ENCODE measurements at regions of chr3 and their contacts with region 1.

Region 1: DNA sequence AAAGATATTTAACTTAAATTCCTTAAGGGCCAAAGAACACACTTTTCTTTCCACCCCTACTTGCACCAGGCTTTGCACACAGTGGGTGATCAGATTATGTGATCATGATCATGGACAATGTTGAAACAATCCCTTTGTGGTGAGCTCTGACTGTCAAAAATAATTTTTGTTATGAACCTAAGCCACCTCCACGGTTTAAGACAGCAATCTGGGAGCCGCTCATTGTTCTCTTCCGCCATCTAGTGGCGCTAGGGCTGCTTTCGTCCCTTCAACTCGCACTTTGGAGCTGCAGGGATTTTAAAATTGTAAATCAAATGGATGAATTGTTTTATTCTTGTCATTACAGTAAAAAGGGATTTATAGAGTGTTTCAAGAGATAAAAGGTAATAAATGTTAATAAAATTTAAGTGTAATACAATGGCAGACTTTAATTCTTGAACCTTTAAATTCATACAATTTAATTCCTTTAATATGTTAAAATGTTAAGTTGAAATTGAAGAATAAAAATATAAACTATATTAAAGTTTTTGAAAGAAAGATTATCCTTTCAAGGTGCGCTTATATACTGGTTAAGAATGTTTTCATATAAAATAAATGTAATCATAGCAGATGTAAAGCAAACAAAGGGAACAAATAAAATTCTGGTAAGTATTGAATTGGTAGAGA is 45.3 kb upstream of the ARL6 start:
- DNase-seq: peak; percentile 79
- ATAC-seq: peak; percentile 84
- H3K4me3 Mint-ChIP-seq: no peak overlapping the region
- H3K27ac Mint-ChIP-seq: no peak overlapping the region
- H3K4me1 Mint-ChIP-seq: no peaks in the 10 kb centered on the region
- H3K27me3 Mint-ChIP-seq: peaks cover 3% of the 10 kb centered on the region
- CTCF ChIP-seq: peak; percentile 88

Region 2: GRCh38 chr3:96863129-96863740 is 856.1 kb before region 1 on chr3:
- CTCF ChIA-PET with region 1: interaction called, 3 read pairs
- POLR2A ChIA-PET with region 1: no interaction called
- intact Hi-C with region 1: loop called (anchors 5 kb)
- DNase-seq: peak; percentile 35
- ATAC-seq: no peak
- H3K4me3 Mint-ChIP-seq: no peak overlapping the region
- H3K27ac Mint-ChIP-seq: no peak overlapping the region
- H3K4me1 Mint-ChIP-seq: no peaks in the 10 kb centered on the region
- H3K27me3 Mint-ChIP-seq: no peaks in the 10 kb centered on the region
- CTCF ChIP-seq: peak; percentile 46

Region 3: DNA sequence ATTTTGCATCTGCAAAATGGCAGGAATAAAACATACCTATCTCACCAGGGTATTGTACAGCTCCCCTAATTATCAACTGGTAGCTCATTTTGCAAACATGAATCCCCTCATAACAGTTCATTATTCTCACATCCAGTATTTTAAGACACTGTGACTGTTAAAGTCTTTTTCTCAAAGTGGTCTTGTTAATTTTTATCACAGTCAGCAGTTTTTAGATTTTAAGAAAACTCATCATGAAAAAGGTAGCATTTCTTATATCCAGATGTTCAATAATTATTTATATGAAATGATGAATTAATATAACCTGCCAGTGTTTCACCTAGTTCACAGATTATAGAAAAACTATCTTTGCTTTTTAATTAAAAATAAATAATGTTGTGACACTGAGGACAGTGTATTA is 309.7 kb before region 1 on chr3:
- CTCF ChIA-PET with region 1: no interaction called
- POLR2A ChIA-PET with region 1: no interaction called
- intact Hi-C with region 1: no loop called
- DNase-seq: no peak
- ATAC-seq: no peak
- H3K4me3 Mint-ChIP-seq: no peak overlapping the region
- H3K27ac Mint-ChIP-seq: no peak overlapping the region
- H3K4me1 Mint-ChIP-seq: no peaks in the 10 kb centered on the region
- H3K27me3 Mint-ChIP-seq: no peaks in the 10 kb centered on the region
- CTCF ChIP-seq: no peak

Region 4: DNA sequence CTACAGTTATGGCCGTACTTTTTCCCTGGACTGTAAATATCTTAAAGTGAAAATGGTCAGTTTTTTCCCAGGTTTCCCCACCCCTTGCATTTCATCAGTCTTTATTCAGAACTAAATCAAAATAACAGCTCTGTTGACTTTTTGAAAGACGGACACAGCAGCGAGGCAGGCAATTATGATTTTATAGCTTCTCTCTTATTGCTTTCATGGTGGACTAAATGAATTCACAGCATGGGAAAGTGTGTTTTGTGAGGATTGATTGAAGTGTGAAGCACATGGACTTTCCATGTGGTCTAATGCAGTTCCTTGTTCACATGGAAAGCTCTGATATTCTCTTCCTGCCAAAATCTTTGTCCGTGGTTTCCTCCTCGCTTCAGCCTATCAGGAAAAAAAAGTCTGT is 223.4 kb before region 1 on chr3:
- CTCF ChIA-PET with region 1: no interaction called
- POLR2A ChIA-PET with region 1: no interaction called
- intact Hi-C with region 1: no loop called
- DNase-seq: no peak
- ATAC-seq: no peak
- H3K4me3 Mint-ChIP-seq: no peak overlapping the region
- H3K27ac Mint-ChIP-seq: no peak overlapping the region
- H3K4me1 Mint-ChIP-seq: no peaks in the 10 kb centered on the region
- H3K27me3 Mint-ChIP-seq: no peaks in the 10 kb centered on the region
- CTCF ChIP-seq: no peak

Region 5: DNA sequence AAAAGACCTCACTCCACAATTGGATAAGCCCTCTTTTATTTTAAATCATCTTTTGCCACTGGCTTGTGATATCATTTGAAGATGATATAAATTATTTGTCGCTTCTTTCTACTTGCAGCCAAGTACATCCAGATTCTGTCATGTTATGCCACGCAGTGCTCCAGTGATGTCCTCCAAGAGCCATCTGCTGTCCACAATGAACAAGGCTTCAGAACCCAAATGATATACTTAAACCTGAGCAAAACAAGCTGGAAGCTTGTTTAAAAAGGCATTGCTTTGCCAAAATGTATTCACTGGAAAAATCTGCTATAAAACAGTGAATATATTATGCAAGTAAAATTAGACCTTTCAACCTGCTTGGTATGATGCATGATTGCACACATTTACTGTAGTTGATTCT is 13.5 kb before region 1 on chr3:
- CTCF ChIA-PET with region 1: interaction called, 12 read pairs
- POLR2A ChIA-PET with region 1: no interaction called
- intact Hi-C with region 1: no loop called
- DNase-seq: no peak
- ATAC-seq: no peak
- H3K4me3 Mint-ChIP-seq: no peak overlapping the region
- H3K27ac Mint-ChIP-seq: no peak overlapping the region
- H3K4me1 Mint-ChIP-seq: no peaks in the 10 kb centered on the region
- H3K27me3 Mint-ChIP-seq: peaks cover 5% of the 10 kb centered on the region
- CTCF ChIP-seq: no peak

Region 6: GRCh38 chr3:97764407-97765238 is 45.3 kb after region 1 on chr3 and contains the start of gene ARL6:
- CTCF ChIA-PET with region 1: interaction called, 12 read pairs
- POLR2A ChIA-PET with region 1: no interaction called
- intact Hi-C with region 1: no loop called
- DNase-seq: peak; percentile 83
- ATAC-seq: peak; percentile 95
- H3K4me3 Mint-ChIP-seq: peak within 1 kb of the TSS; percentile 95
- H3K27ac Mint-ChIP-seq: peak within 1 kb of the TSS; percentile 92
- H3K4me1 Mint-ChIP-seq: peaks cover 20% of the 10 kb centered on the region
- H3K27me3 Mint-ChIP-seq: no peaks in the 10 kb centered on the region
- CTCF ChIP-seq: no peak
- total RNA-seq, gene ARL6: 5.8 to 6.4 TPM

Region 7: DNA sequence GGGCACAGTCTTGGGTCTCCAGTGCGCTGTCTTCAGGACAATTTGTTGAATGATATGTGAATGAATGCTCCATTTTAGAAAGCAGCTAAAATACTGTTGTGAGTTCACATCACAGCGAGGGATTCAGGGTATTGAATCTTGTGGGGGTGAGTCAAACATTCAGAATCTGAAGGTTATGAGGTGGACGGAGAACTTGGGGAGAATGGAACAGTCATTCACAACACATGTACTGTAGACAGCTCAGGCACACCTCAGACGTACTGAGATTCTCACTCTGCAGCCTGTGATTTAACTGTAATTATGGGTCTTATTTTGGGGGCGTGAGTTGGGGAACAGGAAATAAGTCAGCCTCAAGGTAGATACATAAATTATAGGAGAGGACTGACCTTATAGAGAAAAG is 116.5 kb after region 1 on chr3:
- CTCF ChIA-PET with region 1: no interaction called
- POLR2A ChIA-PET with region 1: no interaction called
- intact Hi-C with region 1: no loop called
- DNase-seq: no peak
- ATAC-seq: no peak
- H3K4me3 Mint-ChIP-seq: no peak overlapping the region
- H3K27ac Mint-ChIP-seq: no peak overlapping the region
- H3K4me1 Mint-ChIP-seq: no peaks in the 10 kb centered on the region
- H3K27me3 Mint-ChIP-seq: no peaks in the 10 kb centered on the region
- CTCF ChIP-seq: no peak

Measured in activated CD8-positive, alpha-beta T cell treated with anti-CD3 and anti-CD28 coated beads for 36 hours (primary cell).